Activated naive CD4-positive, alpha-beta T cell treated with anti-CD3 and anti-CD28 coated beads for 36 hours (primary cell): ENCODE measurements at regions of chr18 and their contacts with region 1.

Region 1: GRCh38 chr18:3245853-3246634 is 1.6 kb upstream of the MYL12A start:
- DNase-seq: peak; percentile 91
- H3K4me3 Mint-ChIP-seq: peak overlapping the region; percentile 90
- H3K27ac Mint-ChIP-seq: peak overlapping the region; percentile 92
- H3K4me1 Mint-ChIP-seq: peaks cover 23% of the 10 kb centered on the region
- H3K27me3 Mint-ChIP-seq: no peaks in the 10 kb centered on the region

Region 2: GRCh38 chr18:2104620-2105462 is 1141.2 kb before region 1 on chr18:
- CTCF ChIA-PET with region 1: no interaction called
- intact Hi-C with region 1: loop called (anchors 1 kb)
- DNase-seq: peak; percentile 61
- H3K4me3 Mint-ChIP-seq: no peak overlapping the region
- H3K27ac Mint-ChIP-seq: no peak overlapping the region
- H3K4me1 Mint-ChIP-seq: no peaks in the 10 kb centered on the region
- H3K27me3 Mint-ChIP-seq: peaks cover 5% of the 10 kb centered on the region

Region 3: GRCh38 chr18:2589345-2590068 is 656.5 kb before region 1 on chr18:
- CTCF ChIA-PET with region 1: no interaction called
- intact Hi-C with region 1: no loop called
- DNase-seq: no peak
- H3K4me3 Mint-ChIP-seq: peak overlapping the region; percentile 55
- H3K27ac Mint-ChIP-seq: peak overlapping the region; percentile 93
- H3K4me1 Mint-ChIP-seq: peaks cover 59% of the 10 kb centered on the region
- H3K27me3 Mint-ChIP-seq: no peaks in the 10 kb centered on the region

Region 4: GRCh38 chr18:2906704-2907549 is 339.1 kb before region 1 on chr18:
- CTCF ChIA-PET with region 1: no interaction called
- intact Hi-C with region 1: loop called (anchors 1 kb)
- DNase-seq: peak; percentile 51
- H3K4me3 Mint-ChIP-seq: peak overlapping the region; percentile 81
- H3K27ac Mint-ChIP-seq: peak overlapping the region; percentile 33
- H3K4me1 Mint-ChIP-seq: peaks cover 12% of the 10 kb centered on the region
- H3K27me3 Mint-ChIP-seq: no peaks in the 10 kb centered on the region

Region 5: DNA sequence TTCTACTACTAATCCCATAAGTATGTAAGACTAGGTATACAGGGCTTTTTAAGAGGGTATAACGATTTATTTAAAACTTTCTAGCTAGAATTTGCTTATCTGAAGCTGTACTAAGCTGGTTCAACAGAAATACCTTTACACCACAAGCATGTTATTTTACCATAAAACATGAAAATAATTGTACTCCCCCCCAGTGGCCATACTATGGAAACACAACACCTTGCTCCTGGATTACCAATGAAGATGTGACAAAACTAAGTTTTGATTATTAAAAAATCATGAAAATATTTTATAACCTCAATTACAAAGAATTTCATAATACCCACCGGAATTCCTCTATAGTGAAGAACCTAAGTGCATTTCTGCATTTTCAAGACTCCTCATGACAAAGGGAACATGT is 260.4 kb before region 1 on chr18:
- CTCF ChIA-PET with region 1: interaction called, 8 read pairs
- intact Hi-C with region 1: loop called (anchors 1 kb)
- DNase-seq: no peak
- H3K4me3 Mint-ChIP-seq: no peak overlapping the region
- H3K27ac Mint-ChIP-seq: no peak overlapping the region
- H3K4me1 Mint-ChIP-seq: peaks cover 80% of the 10 kb centered on the region
- H3K27me3 Mint-ChIP-seq: no peaks in the 10 kb centered on the region

Region 6: DNA sequence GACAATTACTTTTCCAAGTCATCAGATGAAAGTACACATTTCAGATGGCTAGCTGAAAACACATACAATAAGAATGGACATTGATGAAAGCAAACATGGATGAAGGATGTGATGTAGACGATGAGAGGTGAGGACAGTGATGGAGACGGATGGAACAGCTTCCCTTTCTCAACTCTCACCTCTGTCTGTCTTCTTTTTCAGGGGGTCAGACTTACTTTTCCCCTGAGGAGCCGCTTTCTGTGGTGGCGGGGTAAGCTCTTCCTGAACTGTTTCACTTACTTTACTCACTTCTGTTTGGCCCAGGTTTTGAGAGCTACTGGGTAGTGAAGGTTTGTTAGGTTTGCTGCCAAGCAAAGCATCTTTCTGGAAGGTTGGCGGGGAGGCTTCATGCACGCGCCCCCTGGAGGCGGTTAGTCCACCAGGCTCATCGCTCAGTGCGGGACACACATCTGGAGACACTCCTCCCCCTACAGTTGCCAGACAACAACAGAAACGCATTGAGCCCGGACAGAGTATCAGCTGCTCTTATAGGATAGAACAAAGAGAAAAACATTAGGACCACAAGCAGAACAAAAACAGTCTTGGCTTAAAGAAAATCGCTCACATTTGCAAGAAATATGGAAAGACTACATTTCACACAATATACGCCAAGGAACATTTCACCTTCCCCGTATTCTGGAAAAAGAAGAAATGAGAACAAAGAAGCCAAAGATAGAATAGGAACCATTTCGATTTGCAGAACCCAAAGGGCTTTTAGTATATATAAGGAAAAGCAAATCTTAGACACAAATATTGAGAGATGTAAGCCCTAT is 116.8 kb before region 1 on chr18:
- CTCF ChIA-PET with region 1: interaction called, 12 read pairs
- intact Hi-C with region 1: loop called (anchors 1 kb)
- DNase-seq: peak; percentile 92
- H3K4me3 Mint-ChIP-seq: no peak overlapping the region
- H3K27ac Mint-ChIP-seq: no peak overlapping the region
- H3K4me1 Mint-ChIP-seq: peaks cover 10% of the 10 kb centered on the region
- H3K27me3 Mint-ChIP-seq: no peaks in the 10 kb centered on the region

Region 7: GRCh38 chr18:3261371-3262246 is 15.6 kb after region 1 on chr18 and contains the start of gene MYL12B:
- CTCF ChIA-PET with region 1: interaction called, 7 read pairs
- intact Hi-C with region 1: loop called (anchors 1 kb)
- DNase-seq: peak; percentile 79
- H3K4me3 Mint-ChIP-seq: peak within 1 kb of the TSS; percentile 92
- H3K27ac Mint-ChIP-seq: peak within 1 kb of the TSS; percentile 97
- H3K4me1 Mint-ChIP-seq: peaks cover 64% of the 10 kb centered on the region
- H3K27me3 Mint-ChIP-seq: no peaks in the 10 kb centered on the region
- total RNA-seq, gene MYL12B: 288 to 293 TPM

Region 8: GRCh38 chr18:4172196-4173100 is 926.4 kb after region 1 on chr18:
- CTCF ChIA-PET with region 1: no interaction called
- intact Hi-C with region 1: no loop called
- DNase-seq: no peak
- H3K4me3 Mint-ChIP-seq: no peak overlapping the region
- H3K27ac Mint-ChIP-seq: no peak overlapping the region
- H3K4me1 Mint-ChIP-seq: no peaks in the 10 kb centered on the region
- H3K27me3 Mint-ChIP-seq: no peaks in the 10 kb centered on the region